T-cell (primary cell): ENCODE measurements at regions of chr15 and their contacts with region 1.

Region 1: GRCh38 chr15:78049691-78050440 is 27.6 kb downstream of the TBC1D2B start:
- DNase-seq: peak in 18 of 35 experiments; percentile 33 to 67 (median 48)
- ATAC-seq: peak; percentile 62 to 73 (median 68)
- H3K4me3 ChIP-seq: peak overlapping the region; percentile 10 to 29
- H3K4me3 Mint-ChIP-seq: peak overlapping the region; percentile 54 to 78 (median 55)
- H3K27ac ChIP-seq: peak overlapping the region; percentile 77
- H3K27ac Mint-ChIP-seq: peak overlapping the region; percentile 95 to 96
- H3K4me1 ChIP-seq: peaks cover 80 to 85% of the 10 kb centered on the region in 2 experiments
- H3K4me1 Mint-ChIP-seq: peaks cover 97 to 99% (median 98%) of the 10 kb centered on the region in 3 donors
- H3K27me3 ChIP-seq: no peaks in the 10 kb centered on the region
- H3K27me3 Mint-ChIP-seq: no peaks in the 10 kb centered on the region

Region 2: DNA sequence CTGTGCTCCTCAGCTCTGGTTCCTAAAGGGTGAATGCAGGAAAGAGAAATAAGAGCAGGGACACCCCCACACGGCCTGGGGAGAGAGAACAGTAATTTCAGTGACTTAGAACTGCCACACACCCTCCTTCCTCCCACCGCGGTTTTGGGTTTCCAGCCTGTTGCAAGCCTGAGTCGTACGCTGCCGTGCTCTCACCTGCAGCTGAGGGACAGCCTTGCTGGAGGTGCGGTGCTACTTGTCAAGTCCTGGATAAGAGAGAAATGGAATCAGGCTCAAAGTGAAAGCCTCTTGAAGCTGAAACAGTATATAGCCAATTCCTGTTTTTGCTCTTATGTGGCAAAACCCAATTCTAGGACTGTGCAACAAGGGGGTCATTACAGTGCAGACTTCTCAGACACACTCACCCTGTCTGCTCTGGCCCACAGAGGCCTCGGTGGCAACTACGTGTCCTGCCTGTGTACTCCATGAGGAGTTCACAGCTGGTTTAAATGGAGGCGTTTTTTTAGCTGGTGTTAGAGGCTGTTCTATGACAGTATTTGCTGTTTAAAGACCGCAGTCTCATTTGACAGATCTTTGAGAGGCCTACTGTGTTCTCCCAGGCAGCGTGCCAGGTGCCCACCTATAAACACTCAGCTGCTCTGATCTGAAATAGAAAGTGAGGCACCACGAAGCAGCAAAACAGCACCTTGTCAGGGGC is 15.2 kb before region 1 on chr15:
- CTCF ChIA-PET with region 1: interaction called, 7 to 23 read pairs
- POLR2A ChIA-PET with region 1: interaction called, 3 to 12 read pairs
- DNase-seq: peak; percentile 50 to 86 (median 78)
- ATAC-seq: peak; percentile 90 to 95 (median 92)
- H3K4me3 ChIP-seq: peak overlapping the region in 1 of 2 donors; percentile 8
- H3K4me3 Mint-ChIP-seq: peak overlapping the region; percentile 62 to 71 (median 66)
- H3K27ac ChIP-seq: peak overlapping the region; percentile 87
- H3K27ac Mint-ChIP-seq: peak overlapping the region; percentile 90 to 95
- H3K4me1 ChIP-seq: peaks cover 42 to 67% of the 10 kb centered on the region in 2 experiments
- H3K4me1 Mint-ChIP-seq: peaks cover 78 to 88% (median 84%) of the 10 kb centered on the region in 3 donors
- H3K27me3 ChIP-seq: no peaks in the 10 kb centered on the region
- H3K27me3 Mint-ChIP-seq: no peaks in the 10 kb centered on the region

Region 3: GRCh38 chr15:78061963-78062435 is 12.1 kb after region 1 on chr15:
- CTCF ChIA-PET with region 1: interaction called in 1 of 2 experiments, 12 read pairs
- POLR2A ChIA-PET with region 1: interaction called in 1 of 2 experiments, 7 read pairs
- DNase-seq: peak in 18 of 35 experiments; percentile 24 to 66 (median 35)
- ATAC-seq: peak; percentile 74 to 88 (median 76)
- H3K4me3 ChIP-seq: peak overlapping the region; percentile 11 to 34
- H3K4me3 Mint-ChIP-seq: peak overlapping the region; percentile 75 to 76 (median 76)
- H3K27ac ChIP-seq: peak overlapping the region; percentile 82
- H3K27ac Mint-ChIP-seq: peak overlapping the region; percentile 94 to 97
- H3K4me1 ChIP-seq: peaks cover 70 to 80% of the 10 kb centered on the region in 2 experiments
- H3K4me1 Mint-ChIP-seq: peaks cover 37 to 46% (median 46%) of the 10 kb centered on the region in 3 donors
- H3K27me3 ChIP-seq: no peaks in the 10 kb centered on the region
- H3K27me3 Mint-ChIP-seq: no peaks in the 10 kb centered on the region

Region 4: GRCh38 chr15:78072080-78072892 is 22.4 kb after region 1 on chr15:
- CTCF ChIA-PET with region 1: interaction called, 3 to 33 read pairs
- POLR2A ChIA-PET with region 1: interaction called, 3 to 7 read pairs
- DNase-seq: peak in 26 of 35 experiments; percentile 13 to 78 (median 40)
- ATAC-seq: peak in 1 of 4 experiments; percentile 73
- H3K4me3 ChIP-seq: no peak overlapping the region
- H3K4me3 Mint-ChIP-seq: peak overlapping the region; percentile 9 to 65 (median 56)
- H3K27ac ChIP-seq: peak overlapping the region; percentile 60
- H3K27ac Mint-ChIP-seq: no peak overlapping the region
- H3K4me1 ChIP-seq: peaks cover 59 to 73% of the 10 kb centered on the region in 2 experiments
- H3K4me1 Mint-ChIP-seq: peaks cover 45 to 52% (median 49%) of the 10 kb centered on the region in 3 donors
- H3K27me3 ChIP-seq: no peaks in the 10 kb centered on the region
- H3K27me3 Mint-ChIP-seq: no peaks in the 10 kb centered on the region

Region 5: DNA sequence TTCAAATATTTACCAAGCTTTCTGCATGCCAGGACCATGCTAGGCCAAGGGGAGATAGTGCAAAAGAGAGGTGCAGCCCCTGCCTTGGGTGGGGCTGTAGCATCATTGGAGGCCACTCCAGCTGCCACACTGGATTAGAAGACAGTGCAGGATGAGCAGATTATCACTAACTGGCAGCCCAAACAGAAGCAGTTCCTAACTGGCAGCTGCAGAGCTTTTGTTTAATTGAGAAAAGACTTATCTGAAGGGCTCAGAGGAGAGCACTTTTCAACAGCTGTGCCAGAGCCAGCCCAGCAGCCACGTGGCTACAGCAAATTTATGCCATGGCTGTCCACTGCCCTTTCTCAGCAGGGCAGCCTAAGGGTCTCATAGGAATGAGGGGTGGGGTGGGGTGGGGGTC is 198.0 kb after region 1 on chr15:
- CTCF ChIA-PET with region 1: no interaction called
- POLR2A ChIA-PET with region 1: no interaction called
- DNase-seq: no peak
- ATAC-seq: no peak
- H3K4me3 ChIP-seq: no peak overlapping the region
- H3K4me3 Mint-ChIP-seq: no peak overlapping the region
- H3K27ac ChIP-seq: no peak overlapping the region
- H3K27ac Mint-ChIP-seq: no peak overlapping the region
- H3K4me1 ChIP-seq: no peaks in the 10 kb centered on the region
- H3K4me1 Mint-ChIP-seq: no peaks in the 10 kb centered on the region
- H3K27me3 ChIP-seq: peaks cover 0 to 8% of the 10 kb centered on the region in 2 experiments
- H3K27me3 Mint-ChIP-seq: no peaks in the 10 kb centered on the region

Region 6: GRCh38 chr15:78663703-78664102 is 613.8 kb after region 1 on chr15:
- CTCF ChIA-PET with region 1: no interaction called
- POLR2A ChIA-PET with region 1: no interaction called
- DNase-seq: no peak
- ATAC-seq: no peak
- H3K4me3 ChIP-seq: no peak overlapping the region
- H3K4me3 Mint-ChIP-seq: no peak overlapping the region
- H3K27ac ChIP-seq: no peak overlapping the region
- H3K27ac Mint-ChIP-seq: no peak overlapping the region
- H3K4me1 ChIP-seq: no peaks in the 10 kb centered on the region
- H3K4me1 Mint-ChIP-seq: peaks cover 0 to 2% (median 1%) of the 10 kb centered on the region in 3 donors
- H3K27me3 ChIP-seq: peaks cover 0 to 20% of the 10 kb centered on the region in 2 experiments
- H3K27me3 Mint-ChIP-seq: peaks cover 7 to 17% of the 10 kb centered on the region in 2 donors